ENCODE measurements at regions of chr6 and their contacts with region 1.

Region 1: GRCh38 chr6:35583893-35584688 is 71.4 kb upstream of the TULP1 start:
- DNase-seq: peak; percentile 37
- ATAC-seq: peak; percentile 87
- H3K4me3 ChIP-seq: no peak overlapping the region
- H3K27ac ChIP-seq: no peak overlapping the region
- H3K4me1 ChIP-seq: no peaks in the 10 kb centered on the region
- H3K27me3 ChIP-seq: no peaks in the 10 kb centered on the region
- CTCF ChIP-seq: peak; percentile 75 to 91 (median 77)
- EP300 ChIP-seq: no peak
- POLR2A ChIP-seq: no peak
- RAD21 ChIP-seq: peak; percentile 98

Region 2: GRCh38 chr6:35522660-35523658 is 61.1 kb before region 1 on chr6:
- CTCF ChIA-PET with region 1: interaction called, 7 read pairs
- POLR2A ChIA-PET with region 1: no interaction called
- RAD21 ChIA-PET with region 1: interaction called, 5 read pairs
- SMC1A ChIA-PET with region 1: interaction called, 9 read pairs
- in situ Hi-C with region 1: no loop called
- intact Hi-C with region 1: loop called (anchors 5 kb)
- DNase-seq: peak; percentile 28
- ATAC-seq: peak; percentile 94
- H3K4me3 ChIP-seq: peak overlapping the region; percentile 43; the same call in 1 of the 2 replicates
- H3K27ac ChIP-seq: no peak overlapping the region
- H3K4me1 ChIP-seq: no peaks in the 10 kb centered on the region
- H3K27me3 ChIP-seq: peaks cover 0 to 1% of the 10 kb centered on the region in 2 experiments; a peak in 2 of 4 replicates
- CTCF ChIP-seq: peak; percentile 93 to 99 (median 97)
- EP300 ChIP-seq: no peak; a peak in 1 of 4 replicates
- POLR2A ChIP-seq: no peak
- RAD21 ChIP-seq: peak; percentile 90

Region 3: DNA sequence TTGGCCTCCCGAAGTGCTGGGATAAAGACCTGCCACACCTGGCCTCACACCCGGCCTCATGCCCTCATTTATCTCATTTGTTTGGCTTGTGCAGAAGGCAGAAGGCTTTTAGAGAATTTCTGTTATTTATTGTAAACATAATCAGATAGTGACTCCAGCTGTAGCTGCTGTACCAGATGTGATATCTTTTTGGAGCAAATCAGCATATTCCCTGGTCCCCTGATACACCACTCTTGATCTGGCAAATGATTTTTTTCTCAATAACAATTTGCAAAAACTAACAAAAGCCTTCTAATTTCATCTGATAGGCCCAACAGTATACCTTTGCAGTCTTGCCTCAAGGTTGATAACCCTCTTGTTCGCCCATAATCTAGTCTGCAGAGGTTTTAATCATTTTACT is 44.9 kb before region 1 on chr6:
- CTCF ChIA-PET with region 1: no interaction called
- POLR2A ChIA-PET with region 1: no interaction called
- RAD21 ChIA-PET with region 1: no interaction called
- SMC1A ChIA-PET with region 1: no interaction called
- in situ Hi-C with region 1: no loop called
- intact Hi-C with region 1: no loop called
- DNase-seq: no peak
- ATAC-seq: no peak
- H3K4me3 ChIP-seq: no peak overlapping the region
- H3K27ac ChIP-seq: no peak overlapping the region
- H3K4me1 ChIP-seq: no peaks in the 10 kb centered on the region
- H3K27me3 ChIP-seq: no peaks in the 10 kb centered on the region
- CTCF ChIP-seq: no peak
- EP300 ChIP-seq: no peak
- POLR2A ChIP-seq: no peak
- RAD21 ChIP-seq: no peak

Region 4: GRCh38 chr6:35601331-35602132 is 17.4 kb after region 1 on chr6:
- CTCF ChIA-PET with region 1: interaction called, 15 read pairs
- POLR2A ChIA-PET with region 1: no interaction called
- RAD21 ChIA-PET with region 1: interaction called, 3 read pairs
- SMC1A ChIA-PET with region 1: interaction called, 9 read pairs
- in situ Hi-C with region 1: no loop called
- intact Hi-C with region 1: no loop called
- DNase-seq: no peak
- ATAC-seq: no peak
- H3K4me3 ChIP-seq: no peak overlapping the region
- H3K27ac ChIP-seq: peak overlapping the region; percentile 34; the same call in 1 of the 2 replicates
- H3K4me1 ChIP-seq: peaks cover 23% of the 10 kb centered on the region
- H3K27me3 ChIP-seq: no peaks in the 10 kb centered on the region
- CTCF ChIP-seq: no peak
- EP300 ChIP-seq: no peak
- POLR2A ChIP-seq: no peak
- RAD21 ChIP-seq: no peak

Region 5: GRCh38 chr6:35640017-35640664 is 56.0 kb after region 1 on chr6:
- CTCF ChIA-PET with region 1: interaction called, 11 read pairs
- POLR2A ChIA-PET with region 1: no interaction called
- RAD21 ChIA-PET with region 1: no interaction called
- SMC1A ChIA-PET with region 1: interaction called, 4 read pairs
- in situ Hi-C with region 1: no loop called
- intact Hi-C with region 1: no loop called
- DNase-seq: no peak
- ATAC-seq: no peak
- H3K4me3 ChIP-seq: no peak overlapping the region
- H3K27ac ChIP-seq: no peak overlapping the region
- H3K4me1 ChIP-seq: peaks cover 5% of the 10 kb centered on the region
- H3K27me3 ChIP-seq: no peaks in the 10 kb centered on the region
- CTCF ChIP-seq: no peak
- EP300 ChIP-seq: no peak
- POLR2A ChIP-seq: no peak
- RAD21 ChIP-seq: no peak

Region 6: GRCh38 chr6:35678021-35678654 is 94.0 kb after region 1 on chr6:
- CTCF ChIA-PET with region 1: interaction called, 4 read pairs
- POLR2A ChIA-PET with region 1: no interaction called
- RAD21 ChIA-PET with region 1: no interaction called
- SMC1A ChIA-PET with region 1: interaction called, 10 read pairs
- in situ Hi-C with region 1: no loop called
- intact Hi-C with region 1: no loop called
- DNase-seq: no peak
- ATAC-seq: no peak
- H3K4me3 ChIP-seq: no peak overlapping the region
- H3K27ac ChIP-seq: no peak overlapping the region
- H3K4me1 ChIP-seq: peaks cover 6% of the 10 kb centered on the region
- H3K27me3 ChIP-seq: no peaks in the 10 kb centered on the region
- CTCF ChIP-seq: no peak
- EP300 ChIP-seq: no peak
- POLR2A ChIP-seq: no peak
- RAD21 ChIP-seq: no peak

Region 7: GRCh38 chr6:35688581-35689322 is 104.7 kb after region 1 on chr6 and contains the start of gene FKBP5:
- CTCF ChIA-PET with region 1: interaction called, 6 read pairs
- POLR2A ChIA-PET with region 1: no interaction called
- RAD21 ChIA-PET with region 1: interaction called, 6 read pairs
- SMC1A ChIA-PET with region 1: interaction called, 6 read pairs
- in situ Hi-C with region 1: no loop called
- intact Hi-C with region 1: loop called (anchors 1 kb)
- DNase-seq: peak; percentile 56
- ATAC-seq: peak; percentile 95
- H3K4me3 ChIP-seq: peak within 1 kb of the TSS; percentile 79
- H3K27ac ChIP-seq: peak within 1 kb of the TSS; percentile 62
- H3K4me1 ChIP-seq: peaks cover 5% of the 10 kb centered on the region
- H3K27me3 ChIP-seq: no peaks in the 10 kb centered on the region
- CTCF ChIP-seq: no peak
- EP300 ChIP-seq: no peak
- POLR2A ChIP-seq: peak; percentile 92
- RAD21 ChIP-seq: no peak
- polyA plus RNA-seq, gene FKBP5: 29.0 to 33.5 TPM

Region 8: GRCh38 chr6:35737413-35738211 is 153.5 kb after region 1 on chr6:
- CTCF ChIA-PET with region 1: interaction called, 374 read pairs
- POLR2A ChIA-PET with region 1: interaction called, 3 read pairs
- RAD21 ChIA-PET with region 1: interaction called, 91 read pairs
- SMC1A ChIA-PET with region 1: interaction called, 149 read pairs
- in situ Hi-C with region 1: loop called (anchors 5 kb)
- intact Hi-C with region 1: loop called (anchors 1 kb)
- DNase-seq: no peak
- ATAC-seq: peak; percentile 90
- H3K4me3 ChIP-seq: no peak overlapping the region
- H3K27ac ChIP-seq: no peak overlapping the region
- H3K4me1 ChIP-seq: peaks cover 4% of the 10 kb centered on the region
- H3K27me3 ChIP-seq: no peaks in the 10 kb centered on the region
- CTCF ChIP-seq: peak; percentile 68 to 87 (median 87); a peak in 5 of 6 replicates
- EP300 ChIP-seq: no peak
- POLR2A ChIP-seq: no peak
- RAD21 ChIP-seq: peak; percentile 89

Measured in GM12878 (cell line).